ENCODE measurements at regions of chr9 and their contacts with region 1.

Region 1: GRCh38 chr9:69421908-69422801 is 97.1 kb downstream of the ENTREP1 start:
- DNase-seq: peak; percentile 59
- ATAC-seq: peak; percentile 86
- H3K4me3 ChIP-seq: no peak overlapping the region
- H3K27ac ChIP-seq: no peak overlapping the region
- H3K4me1 ChIP-seq: no peaks in the 10 kb centered on the region
- H3K27me3 ChIP-seq: no peaks in the 10 kb centered on the region; the same call in 1 of the 2 replicates
- CTCF ChIP-seq: peak; percentile 87
- POLR2A ChIP-seq: 0 out of 2 replicates have a peak, but pooled peaks have one; percentile 31
- RAD21 ChIP-seq: peak; percentile 97

Region 2: DNA sequence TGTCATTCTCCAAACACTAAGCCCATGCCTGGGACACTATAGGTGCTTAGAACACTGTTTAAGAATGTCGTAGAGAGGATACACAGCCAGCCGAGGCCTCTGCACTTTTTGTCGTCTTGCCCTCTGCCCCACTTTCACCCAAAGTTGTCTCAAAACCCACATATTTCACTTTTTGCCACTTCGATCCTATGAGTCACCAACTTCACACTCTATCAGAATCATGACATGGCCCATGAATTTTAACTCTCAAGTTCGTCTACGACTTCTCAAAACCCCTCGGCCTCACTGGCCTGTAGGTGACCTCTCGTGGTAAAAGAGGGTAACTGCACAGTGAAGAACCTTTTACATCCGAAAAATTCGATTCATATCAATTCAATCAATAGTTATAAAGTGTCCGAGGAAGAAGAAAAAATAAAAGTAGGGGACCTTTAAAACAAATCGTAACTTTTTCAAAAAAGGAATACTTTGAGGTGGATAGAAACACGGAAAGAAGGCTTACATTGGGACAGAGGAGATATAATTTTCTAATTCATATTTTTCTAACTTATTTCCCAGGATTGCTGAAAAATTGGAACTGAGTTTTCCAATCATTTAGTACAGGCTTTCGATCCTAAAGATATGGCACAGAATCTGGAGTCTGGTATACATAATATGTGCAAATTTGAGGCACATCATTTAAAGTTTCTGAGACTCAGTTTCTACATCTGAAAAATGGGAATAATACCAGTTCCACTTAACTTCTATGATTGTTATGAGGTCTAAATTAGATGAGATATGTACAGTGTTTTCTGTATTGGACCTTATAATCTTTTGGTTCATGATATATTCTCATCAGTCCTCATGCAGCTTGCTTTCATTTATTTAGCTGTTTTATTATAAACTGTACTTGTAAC is 127.4 kb after region 1 on chr9:
- CTCF ChIA-PET with region 1: interaction called, 17 read pairs
- POLR2A ChIA-PET with region 1: no interaction called
- dilution Hi-C with region 1: no loop called
- in situ Hi-C with region 1: loop called (anchors 5 kb)
- intact Hi-C with region 1: loop called (anchors 2 kb)
- DNase-seq: peak; percentile 61
- ATAC-seq: peak; percentile 93
- H3K4me3 ChIP-seq: no peak overlapping the region
- H3K27ac ChIP-seq: no peak overlapping the region
- H3K4me1 ChIP-seq: no peaks in the 10 kb centered on the region
- H3K27me3 ChIP-seq: no peaks in the 10 kb centered on the region
- CTCF ChIP-seq: peak; percentile 81
- POLR2A ChIP-seq: no peak
- RAD21 ChIP-seq: peak; percentile 77

Region 3: DNA sequence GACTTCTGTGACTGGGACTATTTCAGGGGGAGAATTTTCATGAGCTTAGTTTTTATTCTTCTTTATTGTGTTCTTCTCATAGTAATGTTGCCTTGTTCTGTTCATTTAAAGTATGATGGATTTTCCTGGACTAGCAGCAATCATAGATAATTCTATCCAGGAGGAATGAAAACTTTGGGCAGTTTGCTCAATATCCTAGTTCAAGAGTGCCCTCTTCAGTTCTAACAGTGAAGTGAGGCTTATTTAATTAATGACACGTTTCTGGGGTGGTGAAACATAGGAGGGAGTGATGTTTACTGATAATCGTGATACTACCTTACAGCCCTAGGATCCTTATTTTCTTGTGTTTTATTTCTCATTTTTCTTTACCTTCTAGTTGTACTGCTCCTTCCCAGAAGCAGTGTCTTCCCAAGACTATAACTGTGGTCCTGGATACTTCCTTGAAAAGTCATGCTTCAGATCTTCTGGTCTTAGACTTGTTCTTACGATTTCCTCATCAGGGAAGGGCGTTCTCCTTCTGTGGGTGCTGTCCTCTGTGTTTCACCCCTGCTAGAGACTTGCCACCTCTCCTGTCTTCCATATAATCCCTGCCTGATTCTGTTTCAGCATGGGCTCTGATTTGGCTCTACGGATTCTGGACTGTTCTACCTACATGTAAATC is 455.8 kb after region 1 on chr9:
- CTCF ChIA-PET with region 1: no interaction called
- POLR2A ChIA-PET with region 1: no interaction called
- dilution Hi-C with region 1: no loop called
- in situ Hi-C with region 1: loop called (anchors 5 kb)
- intact Hi-C with region 1: loop called (anchors 2 kb)
- DNase-seq: peak; percentile 52
- ATAC-seq: peak; percentile 89
- H3K4me3 ChIP-seq: no peak overlapping the region
- H3K27ac ChIP-seq: no peak overlapping the region
- H3K4me1 ChIP-seq: peaks cover 2% of the 10 kb centered on the region; the same call in 1 of the 2 replicates
- H3K27me3 ChIP-seq: no peaks in the 10 kb centered on the region
- CTCF ChIP-seq: peak; percentile 79
- POLR2A ChIP-seq: no peak
- RAD21 ChIP-seq: peak; percentile 88

Region 4: GRCh38 chr9:69919461-69920061 is 497.4 kb after region 1 on chr9:
- CTCF ChIA-PET with region 1: interaction called, 4 read pairs
- POLR2A ChIA-PET with region 1: no interaction called
- dilution Hi-C with region 1: no loop called
- in situ Hi-C with region 1: no loop called
- intact Hi-C with region 1: loop called (anchors 2 kb)
- DNase-seq: peak; percentile 74
- ATAC-seq: peak; percentile 93
- H3K4me3 ChIP-seq: no peak overlapping the region
- H3K27ac ChIP-seq: no peak overlapping the region
- H3K4me1 ChIP-seq: peaks cover 2% of the 10 kb centered on the region; the same call in 1 of the 2 replicates
- H3K27me3 ChIP-seq: no peaks in the 10 kb centered on the region
- CTCF ChIP-seq: peak; percentile 82
- POLR2A ChIP-seq: no peak
- RAD21 ChIP-seq: peak; percentile 81

Region 5: DNA sequence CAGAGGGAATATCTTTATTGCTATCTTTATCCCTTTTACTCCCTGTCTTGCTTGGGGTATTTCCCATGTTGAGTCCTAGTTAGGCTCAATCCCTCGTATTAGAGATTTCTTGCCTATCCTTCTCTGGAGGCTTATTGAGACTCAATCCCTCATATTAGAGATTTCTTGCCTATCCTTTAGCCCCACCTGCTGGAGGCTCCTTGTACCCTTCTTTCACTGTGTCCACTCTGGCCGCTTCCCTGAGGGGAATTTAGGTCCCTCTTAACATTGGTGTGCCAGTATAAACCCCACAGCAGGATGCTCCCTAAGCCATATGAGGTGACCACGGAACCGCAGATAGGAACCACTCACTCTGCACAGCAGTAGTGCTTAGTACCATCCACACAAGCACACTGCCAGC is 510.7 kb after region 1 on chr9:
- CTCF ChIA-PET with region 1: no interaction called
- POLR2A ChIA-PET with region 1: no interaction called
- dilution Hi-C with region 1: no loop called
- in situ Hi-C with region 1: no loop called
- intact Hi-C with region 1: loop called (anchors 5 kb)
- DNase-seq: no peak
- ATAC-seq: no peak
- H3K4me3 ChIP-seq: no peak overlapping the region
- H3K27ac ChIP-seq: no peak overlapping the region
- H3K4me1 ChIP-seq: no peaks in the 10 kb centered on the region
- H3K27me3 ChIP-seq: no peaks in the 10 kb centered on the region
- CTCF ChIP-seq: peak; percentile 26; the same call in 1 of the 2 replicates
- POLR2A ChIP-seq: no peak
- RAD21 ChIP-seq: peak; percentile 31

Region 6: DNA sequence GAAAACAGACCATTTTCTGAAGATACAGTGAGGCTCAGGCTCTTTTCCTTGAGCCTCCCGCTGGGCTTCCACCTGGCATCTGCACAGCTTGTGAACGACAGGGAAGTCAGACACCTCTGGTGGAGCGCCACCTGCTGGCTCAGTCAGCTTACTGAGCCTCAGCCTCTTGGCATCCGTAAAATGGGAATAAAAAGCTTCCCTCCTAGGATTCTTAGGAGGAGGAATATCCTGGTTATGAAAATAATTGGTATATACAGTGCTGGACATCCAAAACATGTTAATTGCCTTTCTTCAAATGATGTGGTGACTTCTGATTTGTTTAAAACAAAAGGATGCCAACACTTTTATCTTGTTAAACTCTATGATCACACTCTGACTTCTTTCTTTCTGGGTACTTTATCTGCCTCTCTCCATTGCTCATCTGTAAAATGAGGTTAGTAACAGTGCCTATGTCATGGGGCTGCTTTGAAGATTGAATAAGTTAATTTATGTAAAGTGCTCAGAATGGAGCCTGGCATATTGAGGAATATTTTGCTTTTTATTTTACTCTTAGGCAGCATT is 689.0 kb after region 1 on chr9:
- CTCF ChIA-PET with region 1: no interaction called
- POLR2A ChIA-PET with region 1: no interaction called
- dilution Hi-C with region 1: no loop called
- in situ Hi-C with region 1: loop called (anchors 25 kb)
- intact Hi-C with region 1: loop called (anchors 10 kb)
- DNase-seq: peak; percentile 81
- ATAC-seq: peak; percentile 67
- H3K4me3 ChIP-seq: no peak overlapping the region
- H3K27ac ChIP-seq: no peak overlapping the region
- H3K4me1 ChIP-seq: peaks cover 7% of the 10 kb centered on the region; the same call in 1 of the 2 replicates
- H3K27me3 ChIP-seq: no peaks in the 10 kb centered on the region
- CTCF ChIP-seq: peak; percentile 83
- POLR2A ChIP-seq: no peak
- RAD21 ChIP-seq: peak; percentile 82

Measured in IMR-90 (cell line).